ENCODE measurements at regions of chr2 and their contacts with region 1.

Region 1: GRCh38 chr2:112092286-112093041 is 37.4 kb downstream of the TMEM87B start:
- DNase-seq: no peak
- ATAC-seq: no peak
- H3K4me3 ChIP-seq: no peak overlapping the region
- H3K27ac ChIP-seq: no peak overlapping the region
- H3K4me1 ChIP-seq: no peaks in the 10 kb centered on the region
- H3K27me3 ChIP-seq: no peaks in the 10 kb centered on the region
- CTCF ChIP-seq: no peak

Region 2: GRCh38 chr2:111946294-111947114 is 146.0 kb before region 1 on chr2:
- CTCF ChIA-PET with region 1: no interaction called
- POLR2A ChIA-PET with region 1: no interaction called
- in situ Hi-C with region 1: no loop called
- intact Hi-C with region 1: no loop called
- DNase-seq: no peak
- ATAC-seq: peak; percentile 58; the same call in 1 of the 2 replicates
- H3K4me3 ChIP-seq: no peak overlapping the region
- H3K27ac ChIP-seq: no peak overlapping the region
- H3K4me1 ChIP-seq: no peaks in the 10 kb centered on the region
- H3K27me3 ChIP-seq: no peaks in the 10 kb centered on the region
- CTCF ChIP-seq: no peak

Region 3: DNA sequence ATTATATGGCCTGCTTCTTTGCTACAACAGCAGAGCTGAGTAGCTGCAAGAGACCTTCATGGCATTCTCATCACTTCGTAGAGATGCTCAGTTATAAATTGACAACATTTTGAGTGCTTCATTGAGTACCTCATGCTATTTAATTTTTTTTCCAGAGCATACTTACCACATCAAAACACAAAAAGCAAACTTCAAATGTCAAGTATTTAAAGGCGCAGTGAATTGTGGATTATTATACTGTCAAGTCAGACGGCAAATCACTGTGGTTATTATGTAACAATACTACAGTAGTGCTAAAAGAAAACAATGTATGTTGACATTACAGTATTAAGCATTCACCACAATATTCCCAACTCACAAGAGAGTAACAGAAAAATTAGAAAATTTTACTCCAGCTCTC is 149.9 kb after region 1 on chr2:
- CTCF ChIA-PET with region 1: no interaction called
- POLR2A ChIA-PET with region 1: interaction called, 13 read pairs
- in situ Hi-C with region 1: no loop called
- intact Hi-C with region 1: no loop called
- DNase-seq: no peak
- ATAC-seq: no peak
- H3K4me3 ChIP-seq: no peak overlapping the region
- H3K27ac ChIP-seq: no peak overlapping the region
- H3K4me1 ChIP-seq: no peaks in the 10 kb centered on the region
- H3K27me3 ChIP-seq: no peaks in the 10 kb centered on the region
- CTCF ChIP-seq: no peak

Region 4: GRCh38 chr2:113240150-113240862 is 1147.8 kb after region 1 on chr2:
- CTCF ChIA-PET with region 1: no interaction called
- POLR2A ChIA-PET with region 1: no interaction called
- in situ Hi-C with region 1: no loop called
- intact Hi-C with region 1: no loop called
- DNase-seq: peak; percentile 61
- ATAC-seq: peak; percentile 60
- H3K4me3 ChIP-seq: peak overlapping the region in 1 of 2 experiments; percentile 0; a peak in 1 of 4 replicates
- H3K27ac ChIP-seq: peak overlapping the region; percentile 87
- H3K4me1 ChIP-seq: peaks cover 21% of the 10 kb centered on the region
- H3K27me3 ChIP-seq: no peaks in the 10 kb centered on the region
- CTCF ChIP-seq: no peak